Natural killer cell (primary cell): ENCODE measurements at regions of chr6 and their contacts with region 1.

Region 1: DNA sequence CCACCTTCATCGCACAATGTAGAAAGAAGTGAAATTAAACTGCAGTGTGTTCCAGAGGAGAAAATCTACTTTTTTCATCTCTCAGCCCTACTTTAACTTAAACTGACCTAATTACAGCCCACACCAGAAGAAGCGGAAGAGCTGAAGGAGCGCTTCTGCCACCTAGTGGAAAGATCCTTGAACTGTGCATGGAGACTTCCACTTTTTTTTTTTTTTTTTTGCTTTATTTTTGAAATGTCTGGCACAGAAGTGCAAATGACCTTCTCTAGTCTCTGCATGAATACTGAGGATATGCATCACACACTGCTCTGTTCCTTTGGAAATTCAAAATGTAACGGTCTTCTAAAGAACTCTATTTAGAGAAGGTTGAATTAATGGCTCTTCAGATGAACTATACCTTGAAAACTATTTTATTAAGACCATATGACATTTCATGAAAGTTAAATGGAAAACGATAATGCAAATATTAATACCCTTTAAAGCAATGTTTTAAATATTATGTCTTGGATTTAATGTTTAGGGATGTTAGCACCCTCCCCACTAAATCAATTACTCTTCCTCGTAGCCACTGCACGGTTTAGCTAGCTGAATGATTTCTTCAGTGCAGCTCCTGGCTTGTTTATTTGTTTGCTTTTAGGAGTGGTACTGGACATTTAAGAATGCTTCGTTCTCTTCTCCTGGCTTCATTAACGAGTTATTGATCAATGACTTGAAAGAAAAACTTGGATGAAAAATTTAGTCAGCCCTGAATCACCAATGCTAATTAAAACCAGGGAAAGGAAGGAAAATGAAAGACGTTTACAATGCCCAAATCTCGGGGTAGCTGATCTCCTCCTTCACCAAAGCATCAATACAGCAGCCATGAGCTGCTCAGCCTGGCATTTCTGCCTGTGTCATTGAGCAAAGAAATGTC is 569.6 kb upstream of the GJE1 start:
- DNase-seq: peak; percentile 29 to 89
- ATAC-seq: peak; percentile 94 to 96 (median 96)
- H3K4me3 ChIP-seq: peak overlapping the region; percentile 46
- H3K4me3 Mint-ChIP-seq: peak overlapping the region; percentile 98
- H3K27ac ChIP-seq: peak overlapping the region; percentile 52
- H3K27ac Mint-ChIP-seq: peak overlapping the region; percentile 88 to 92
- H3K4me1 ChIP-seq: peaks cover 9% of the 10 kb centered on the region
- H3K4me1 Mint-ChIP-seq: peaks cover 13 to 14% of the 10 kb centered on the region in 2 donors
- H3K27me3 ChIP-seq: no peaks in the 10 kb centered on the region
- H3K27me3 Mint-ChIP-seq: no peaks in the 10 kb centered on the region
- CTCF ChIP-seq: peak; percentile 94

Region 2: GRCh38 chr6:139881728-139882211 is 1681.3 kb before region 1 on chr6:
- intact Hi-C with region 1: loop called (anchors 1 kb)
- DNase-seq: peak in 1 of 2 donors; percentile 45
- ATAC-seq: peak in 2 of 3 donors; percentile 49 to 50
- H3K4me3 ChIP-seq: no peak overlapping the region
- H3K4me3 Mint-ChIP-seq: no peak overlapping the region
- H3K27ac ChIP-seq: no peak overlapping the region
- H3K27ac Mint-ChIP-seq: no peak overlapping the region
- H3K4me1 ChIP-seq: no peaks in the 10 kb centered on the region
- H3K4me1 Mint-ChIP-seq: no peaks in the 10 kb centered on the region
- H3K27me3 ChIP-seq: no peaks in the 10 kb centered on the region
- H3K27me3 Mint-ChIP-seq: peaks cover 0 to 2% of the 10 kb centered on the region in 2 donors
- CTCF ChIP-seq: peak; percentile 20

Region 3: DNA sequence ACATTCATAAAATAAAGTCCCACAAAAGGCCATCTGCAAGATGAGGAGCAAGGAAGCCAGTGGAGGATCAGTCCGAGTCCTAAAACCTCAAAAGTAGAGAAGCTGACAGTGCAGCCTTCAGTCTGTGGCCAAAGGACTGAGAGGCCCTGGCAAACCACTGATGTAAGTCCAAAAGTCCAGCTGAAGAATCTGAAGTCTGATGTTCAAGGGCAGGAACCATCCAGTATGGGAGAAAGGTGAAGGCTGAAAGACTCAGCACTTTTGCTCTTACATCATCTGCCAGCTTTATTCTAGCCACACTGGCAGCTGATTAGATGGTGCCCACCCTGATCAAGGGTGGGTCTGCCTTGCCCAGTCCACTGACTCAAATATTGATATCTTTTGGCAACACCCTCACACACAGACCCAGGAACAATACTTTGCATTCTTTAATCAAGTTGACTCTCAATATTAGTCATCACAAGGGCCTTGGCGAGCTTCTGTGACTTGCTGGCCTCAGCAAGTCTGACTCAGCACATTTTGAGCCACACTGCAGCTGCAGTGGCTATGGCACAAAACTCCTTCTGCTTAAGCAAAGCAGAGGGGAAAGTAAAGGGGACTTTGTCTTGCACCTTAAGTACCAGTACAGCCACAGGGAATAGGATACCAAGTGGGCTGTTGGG is 818.3 kb before region 1 on chr6:
- intact Hi-C with region 1: loop called (anchors 5 kb)
- DNase-seq: no peak
- ATAC-seq: no peak
- H3K4me3 ChIP-seq: no peak overlapping the region
- H3K4me3 Mint-ChIP-seq: no peak overlapping the region
- H3K27ac ChIP-seq: no peak overlapping the region
- H3K27ac Mint-ChIP-seq: no peak overlapping the region
- H3K4me1 ChIP-seq: no peaks in the 10 kb centered on the region
- H3K4me1 Mint-ChIP-seq: no peaks in the 10 kb centered on the region
- H3K27me3 ChIP-seq: no peaks in the 10 kb centered on the region
- H3K27me3 Mint-ChIP-seq: no peaks in the 10 kb centered on the region
- CTCF ChIP-seq: no peak

Region 4: GRCh38 chr6:141248021-141248799 is 314.9 kb before region 1 on chr6:
- intact Hi-C with region 1: no loop called
- DNase-seq: no peak
- ATAC-seq: no peak
- H3K4me3 ChIP-seq: no peak overlapping the region
- H3K4me3 Mint-ChIP-seq: no peak overlapping the region
- H3K27ac ChIP-seq: no peak overlapping the region
- H3K27ac Mint-ChIP-seq: no peak overlapping the region
- H3K4me1 ChIP-seq: no peaks in the 10 kb centered on the region
- H3K4me1 Mint-ChIP-seq: no peaks in the 10 kb centered on the region
- H3K27me3 ChIP-seq: no peaks in the 10 kb centered on the region
- H3K27me3 Mint-ChIP-seq: no peaks in the 10 kb centered on the region
- CTCF ChIP-seq: no peak

Region 5: GRCh38 chr6:141309295-141309694 is 253.8 kb before region 1 on chr6:
- intact Hi-C with region 1: loop called (anchors 1 kb)
- DNase-seq: peak in 1 of 2 donors; percentile 32
- ATAC-seq: peak in 2 of 3 donors; percentile 38 to 67
- H3K4me3 ChIP-seq: no peak overlapping the region
- H3K4me3 Mint-ChIP-seq: no peak overlapping the region
- H3K27ac ChIP-seq: no peak overlapping the region
- H3K27ac Mint-ChIP-seq: no peak overlapping the region
- H3K4me1 ChIP-seq: no peaks in the 10 kb centered on the region
- H3K4me1 Mint-ChIP-seq: no peaks in the 10 kb centered on the region
- H3K27me3 ChIP-seq: no peaks in the 10 kb centered on the region
- H3K27me3 Mint-ChIP-seq: no peaks in the 10 kb centered on the region
- CTCF ChIP-seq: no peak

Region 6: DNA sequence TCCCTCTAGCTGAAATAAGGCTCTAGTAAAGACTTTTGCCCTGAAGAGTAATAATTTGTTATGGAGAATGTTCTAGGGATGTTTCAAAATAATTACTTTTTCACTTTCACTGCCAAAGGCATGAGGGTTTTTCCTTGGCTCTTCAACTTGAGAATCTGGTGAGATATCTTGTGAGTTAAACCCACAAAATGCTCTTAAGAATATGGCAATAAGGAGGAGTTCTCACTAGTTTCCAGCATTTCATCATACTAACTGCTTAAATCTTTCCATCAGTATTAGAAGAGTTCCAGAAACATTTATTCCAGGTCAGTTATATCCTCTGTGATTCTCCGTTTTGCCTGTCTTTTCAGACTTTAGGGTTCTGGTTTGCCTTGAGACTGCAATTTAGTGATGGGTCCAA is 216.0 kb before region 1 on chr6:
- intact Hi-C with region 1: no loop called
- DNase-seq: no peak
- ATAC-seq: no peak
- H3K4me3 ChIP-seq: no peak overlapping the region
- H3K4me3 Mint-ChIP-seq: no peak overlapping the region
- H3K27ac ChIP-seq: no peak overlapping the region
- H3K27ac Mint-ChIP-seq: no peak overlapping the region
- H3K4me1 ChIP-seq: no peaks in the 10 kb centered on the region
- H3K4me1 Mint-ChIP-seq: no peaks in the 10 kb centered on the region
- H3K27me3 ChIP-seq: no peaks in the 10 kb centered on the region
- H3K27me3 Mint-ChIP-seq: no peaks in the 10 kb centered on the region
- CTCF ChIP-seq: no peak

Region 7: GRCh38 chr6:141403795-141404194 is 159.3 kb before region 1 on chr6:
- intact Hi-C with region 1: loop called (anchors 5 kb)
- DNase-seq: no peak
- ATAC-seq: no peak
- H3K4me3 ChIP-seq: no peak overlapping the region
- H3K4me3 Mint-ChIP-seq: no peak overlapping the region
- H3K27ac ChIP-seq: no peak overlapping the region
- H3K27ac Mint-ChIP-seq: no peak overlapping the region
- H3K4me1 ChIP-seq: no peaks in the 10 kb centered on the region
- H3K4me1 Mint-ChIP-seq: peaks cover 8 to 9% of the 10 kb centered on the region in 2 donors
- H3K27me3 ChIP-seq: peaks cover 2% of the 10 kb centered on the region
- H3K27me3 Mint-ChIP-seq: peaks cover 0 to 5% of the 10 kb centered on the region in 2 donors
- CTCF ChIP-seq: no peak

Region 8: GRCh38 chr6:141464490-141464889 is 98.6 kb before region 1 on chr6:
- intact Hi-C with region 1: loop called (anchors 10 kb)
- DNase-seq: peak in 1 of 2 donors; percentile 47
- ATAC-seq: peak in 2 of 3 donors; percentile 32 to 58
- H3K4me3 ChIP-seq: no peak overlapping the region
- H3K4me3 Mint-ChIP-seq: no peak overlapping the region
- H3K27ac ChIP-seq: no peak overlapping the region
- H3K27ac Mint-ChIP-seq: no peak overlapping the region
- H3K4me1 ChIP-seq: no peaks in the 10 kb centered on the region
- H3K4me1 Mint-ChIP-seq: peaks cover 8 to 13% of the 10 kb centered on the region in 2 donors
- H3K27me3 ChIP-seq: no peaks in the 10 kb centered on the region
- H3K27me3 Mint-ChIP-seq: no peaks in the 10 kb centered on the region
- CTCF ChIP-seq: no peak

Region 9: DNA sequence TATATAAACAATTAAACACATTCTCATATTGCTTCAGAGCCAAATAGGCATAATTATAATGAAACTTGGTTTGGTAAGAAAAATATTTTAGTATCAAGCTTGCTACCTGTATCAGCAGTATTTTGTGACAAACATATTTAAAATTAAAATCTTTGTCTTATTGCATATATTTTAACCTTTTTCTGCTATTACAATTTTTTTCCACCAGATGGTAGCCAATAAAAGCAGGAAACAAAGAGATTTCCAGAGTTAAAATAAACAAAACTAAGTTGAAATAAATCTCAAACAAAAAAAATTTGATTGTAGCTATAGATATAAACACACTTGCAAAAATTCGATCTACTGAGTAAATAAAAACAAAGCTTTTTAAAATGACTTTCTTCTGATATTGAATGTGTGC is 78.3 kb after region 1 on chr6:
- intact Hi-C with region 1: no loop called
- DNase-seq: no peak
- ATAC-seq: no peak
- H3K4me3 ChIP-seq: no peak overlapping the region
- H3K4me3 Mint-ChIP-seq: no peak overlapping the region
- H3K27ac ChIP-seq: no peak overlapping the region
- H3K27ac Mint-ChIP-seq: no peak overlapping the region
- H3K4me1 ChIP-seq: no peaks in the 10 kb centered on the region
- H3K4me1 Mint-ChIP-seq: no peaks in the 10 kb centered on the region
- H3K27me3 ChIP-seq: no peaks in the 10 kb centered on the region
- H3K27me3 Mint-ChIP-seq: no peaks in the 10 kb centered on the region
- CTCF ChIP-seq: no peak